ENCODE measurements at regions of chr17 and their contacts with region 1.

Region 1: DNA sequence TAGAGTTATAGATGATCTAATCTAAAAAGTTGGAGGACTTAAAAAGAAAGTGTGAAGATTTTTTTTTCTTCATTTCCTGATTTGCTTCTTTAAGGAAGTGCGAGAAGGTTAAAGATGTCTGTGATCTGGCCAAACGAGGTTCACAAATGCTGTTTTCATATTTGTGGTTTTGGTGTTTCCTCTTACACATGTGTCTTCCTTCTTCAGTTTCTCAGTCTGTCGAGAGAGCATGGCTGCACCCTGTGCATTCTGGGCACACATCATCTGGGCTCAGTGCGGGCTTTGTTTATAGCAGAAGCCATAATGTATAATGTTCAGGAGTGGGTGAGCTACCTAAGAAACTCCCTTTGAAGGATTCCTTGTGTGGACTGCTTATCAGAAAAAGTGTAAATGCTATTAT is 260.4 kb upstream of the TBX2 start:
- DNase-seq: peak; percentile 27 to 89 (median 80)
- ATAC-seq: peak; percentile 98
- H3K4me3 ChIP-seq: no peak overlapping the region
- H3K4me3 Mint-ChIP-seq: peak overlapping the region; percentile 24 to 81 (median 66)
- H3K27ac ChIP-seq: peak overlapping the region; percentile 7
- H3K27ac Mint-ChIP-seq: peak overlapping the region; percentile 28 to 86 (median 61)
- H3K4me1 ChIP-seq: peaks cover 14 to 29% of the 10 kb centered on the region in 2 donors
- H3K4me1 Mint-ChIP-seq: peaks cover 12 to 55% (median 44%) of the 10 kb centered on the region in 7 donors
- H3K27me3 ChIP-seq: no peaks in the 10 kb centered on the region
- H3K27me3 Mint-ChIP-seq: no peaks in the 10 kb centered on the region

Region 2: GRCh38 chr17:60525685-60526514 is 613.3 kb before region 1 on chr17 and contains the start of gene APPBP2:
- CTCF ChIA-PET with region 1: no interaction called
- POLR2A ChIA-PET with region 1: no interaction called
- intact Hi-C with region 1: loop called in 1 of 2 experiments (anchors 5 kb)
- DNase-seq: peak; percentile 59 to 80 (median 77)
- ATAC-seq: peak; percentile 92
- H3K4me3 ChIP-seq: peak within 1 kb of the TSS; percentile 86
- H3K4me3 Mint-ChIP-seq: peak within 1 kb of the TSS; percentile 98 to 100 (median 99)
- H3K27ac ChIP-seq: peak within 1 kb of the TSS; percentile 99
- H3K27ac Mint-ChIP-seq: peak within 1 kb of the TSS; percentile 96 to 99 (median 98)
- H3K4me1 ChIP-seq: peaks cover 19 to 25% of the 10 kb centered on the region in 2 donors
- H3K4me1 Mint-ChIP-seq: peaks cover 31 to 63% (median 55%) of the 10 kb centered on the region in 7 donors
- H3K27me3 ChIP-seq: no peaks in the 10 kb centered on the region
- H3K27me3 Mint-ChIP-seq: no peaks in the 10 kb centered on the region
- total RNA-seq, gene APPBP2: 24.2 to 47.5 (median 33.0) TPM

Region 3: GRCh38 chr17:61122326-61122913 is 16.8 kb before region 1 on chr17:
- CTCF ChIA-PET with region 1: no interaction called
- POLR2A ChIA-PET with region 1: no interaction called
- intact Hi-C with region 1: no loop called
- DNase-seq: no peak
- ATAC-seq: no peak
- H3K4me3 ChIP-seq: no peak overlapping the region
- H3K4me3 Mint-ChIP-seq: no peak overlapping the region
- H3K27ac ChIP-seq: no peak overlapping the region
- H3K27ac Mint-ChIP-seq: no peak overlapping the region
- H3K4me1 ChIP-seq: no peaks in the 10 kb centered on the region
- H3K4me1 Mint-ChIP-seq: peaks cover 0 to 4% (median 2%) of the 10 kb centered on the region in 7 donors
- H3K27me3 ChIP-seq: no peaks in the 10 kb centered on the region
- H3K27me3 Mint-ChIP-seq: peaks cover 0 to 8% (median 0%) of the 10 kb centered on the region in 5 donors

Region 4: GRCh38 chr17:61221597-61222460 is 82.6 kb after region 1 on chr17:
- CTCF ChIA-PET with region 1: interaction called, 3 read pairs
- POLR2A ChIA-PET with region 1: no interaction called
- intact Hi-C with region 1: loop called (anchors 1 to 2 kb)
- DNase-seq: peak in 6 of 9 donors; percentile 8 to 27 (median 14)
- ATAC-seq: peak; percentile 58
- H3K4me3 ChIP-seq: peak overlapping the region; percentile 52
- H3K4me3 Mint-ChIP-seq: peak overlapping the region in 9 of 10 donors; percentile 79 to 89 (median 84)
- H3K27ac ChIP-seq: peak overlapping the region; percentile 34
- H3K27ac Mint-ChIP-seq: peak overlapping the region; percentile 25 to 87 (median 77)
- H3K4me1 ChIP-seq: peaks cover 21 to 24% of the 10 kb centered on the region in 2 donors
- H3K4me1 Mint-ChIP-seq: peaks cover 33 to 65% (median 43%) of the 10 kb centered on the region in 7 donors
- H3K27me3 ChIP-seq: no peaks in the 10 kb centered on the region
- H3K27me3 Mint-ChIP-seq: no peaks in the 10 kb centered on the region

Region 5: GRCh38 chr17:61412143-61412859 is 273.1 kb after region 1 on chr17:
- CTCF ChIA-PET with region 1: no interaction called
- POLR2A ChIA-PET with region 1: no interaction called
- intact Hi-C with region 1: loop called in 1 of 2 experiments (anchors 10 kb)
- DNase-seq: peak; percentile 59 to 91 (median 81)
- ATAC-seq: peak; percentile 88
- H3K4me3 ChIP-seq: peak overlapping the region; percentile 64
- H3K4me3 Mint-ChIP-seq: peak overlapping the region in 9 of 10 donors; percentile 56 to 85 (median 76)
- H3K27ac ChIP-seq: peak overlapping the region; percentile 37
- H3K27ac Mint-ChIP-seq: no peak overlapping the region
- H3K4me1 ChIP-seq: peaks cover 7 to 15% of the 10 kb centered on the region in 2 donors
- H3K4me1 Mint-ChIP-seq: peaks cover 12 to 31% (median 23%) of the 10 kb centered on the region in 7 donors
- H3K27me3 ChIP-seq: peaks cover 0 to 23% of the 10 kb centered on the region in 2 donors
- H3K27me3 Mint-ChIP-seq: peaks cover 22 to 59% (median 28%) of the 10 kb centered on the region in 5 donors

Measured in naive thymus-derived CD4-positive, alpha-beta T cell (primary cell).